GM10248 (cell line): ENCODE measurements at regions of chr6 and their contacts with region 1.

Region 1: GRCh38 chr6:43667245-43668150 is 20.1 kb downstream of the MRPS18A start:
- DNase-seq: peak; percentile 86
- CTCF ChIP-seq: peak; percentile 100

Region 2: GRCh38 chr6:43635387-43636307 is 31.9 kb before region 1 on chr6 and contains the start of gene MAD2L1BP:
- CTCF ChIA-PET with region 1: interaction called, 32 read pairs
- POLR2A ChIA-PET with region 1: no interaction called
- DNase-seq: peak; percentile 83
- CTCF ChIP-seq: no peak

Region 3: GRCh38 chr6:43657221-43657802 is 10.2 kb before region 1 on chr6:
- CTCF ChIA-PET with region 1: interaction called, 54 read pairs
- POLR2A ChIA-PET with region 1: no interaction called
- DNase-seq: no peak
- CTCF ChIP-seq: no peak

Region 4: GRCh38 chr6:43687437-43688347 is 20.2 kb after region 1 on chr6 and contains the start of gene MRPS18A:
- CTCF ChIA-PET with region 1: interaction called, 152 read pairs
- POLR2A ChIA-PET with region 1: no interaction called
- DNase-seq: peak; percentile 90
- CTCF ChIP-seq: no peak

Region 5: DNA sequence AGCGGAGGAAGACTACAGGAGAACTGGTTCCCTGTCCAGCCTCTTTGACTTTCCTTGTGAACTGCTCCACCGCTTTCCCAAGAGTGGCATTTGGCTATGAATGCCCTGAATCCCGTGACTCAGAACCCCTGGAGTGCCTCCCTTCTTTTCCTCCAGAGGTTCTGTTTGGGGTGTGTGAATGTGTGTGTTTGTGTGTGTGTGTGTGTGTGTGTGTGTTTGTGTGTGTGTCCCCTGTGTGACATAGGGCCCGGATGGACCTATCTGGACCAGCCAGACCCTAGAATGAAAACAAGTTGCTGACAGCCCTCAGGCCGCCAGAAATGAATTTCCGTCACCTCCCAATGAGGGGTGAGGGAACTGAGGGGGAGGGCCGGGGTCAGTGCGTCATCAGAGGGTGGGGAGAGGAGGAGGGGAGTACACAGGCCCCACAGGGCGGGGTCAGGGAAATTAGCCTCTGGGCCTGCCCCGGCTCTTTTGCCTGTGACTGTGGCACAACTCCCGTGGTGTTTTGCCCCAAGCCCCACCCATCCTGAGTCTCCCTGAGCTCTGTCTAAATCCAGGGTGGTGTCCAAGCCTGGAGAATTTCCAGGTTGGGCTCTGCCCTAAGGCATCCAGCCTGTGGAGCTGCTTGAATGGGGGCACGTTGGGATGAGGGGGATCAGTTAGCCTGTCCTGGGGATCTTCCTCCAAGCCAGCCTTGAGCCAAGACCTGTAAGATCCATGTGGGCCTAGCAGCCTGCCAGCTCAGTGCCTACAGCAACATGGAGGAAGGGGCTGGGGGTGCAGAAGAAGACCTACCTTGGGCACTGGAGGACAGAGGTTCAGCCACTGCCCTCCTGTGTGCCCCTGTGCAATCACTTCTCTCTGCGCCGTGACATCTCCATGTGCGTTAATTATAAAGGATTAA is 35.3 kb after region 1 on chr6:
- CTCF ChIA-PET with region 1: interaction called, 21 read pairs
- POLR2A ChIA-PET with region 1: no interaction called
- DNase-seq: peak; percentile 58
- CTCF ChIP-seq: no peak

Region 6: DNA sequence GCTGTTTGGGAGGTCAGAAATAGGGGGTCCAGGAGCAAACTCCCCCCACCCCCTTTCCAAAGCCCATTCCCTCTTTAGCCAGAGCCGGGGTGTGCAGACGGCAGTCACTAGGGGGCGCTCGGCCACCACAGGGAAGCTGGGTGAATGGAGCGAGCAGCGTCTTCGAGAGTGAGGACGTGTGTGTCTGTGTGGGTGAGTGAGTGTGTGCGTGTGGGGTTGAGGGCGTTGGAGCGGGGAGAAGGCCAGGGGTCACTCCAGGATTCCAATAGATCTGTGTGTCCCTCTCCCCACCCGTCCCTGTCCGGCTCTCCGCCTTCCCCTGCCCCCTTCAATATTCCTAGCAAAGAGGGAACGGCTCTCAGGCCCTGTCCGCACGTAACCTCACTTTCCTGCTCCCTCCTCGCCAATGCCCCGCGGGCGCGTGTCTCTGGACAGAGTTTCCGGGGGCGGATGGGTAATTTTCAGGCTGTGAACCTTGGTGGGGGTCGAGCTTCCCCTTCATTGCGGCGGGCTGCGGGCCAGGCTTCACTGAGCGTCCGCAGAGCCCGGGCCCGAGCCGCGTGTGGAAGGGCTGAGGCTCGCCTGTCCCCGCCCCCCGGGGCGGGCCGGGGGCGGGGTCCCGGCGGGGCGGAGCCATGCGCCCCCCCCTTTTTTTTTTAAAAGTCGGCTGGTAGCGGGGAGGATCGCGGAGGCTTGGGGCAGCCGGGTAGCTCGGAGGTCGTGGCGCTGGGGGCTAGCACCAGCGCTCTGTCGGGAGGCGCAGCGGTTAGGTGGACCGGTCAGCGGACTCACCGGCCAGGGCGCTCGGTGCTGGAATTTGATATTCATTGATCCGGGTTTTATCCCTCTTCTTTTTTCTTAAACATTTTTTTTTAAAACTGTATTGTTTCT is 102.3 kb after region 1 on chr6 and contains the start of gene VEGFA:
- CTCF ChIA-PET with region 1: interaction called, 83 read pairs
- POLR2A ChIA-PET with region 1: no interaction called
- DNase-seq: peak; percentile 97
- CTCF ChIP-seq: peak; percentile 99

Region 7: DNA sequence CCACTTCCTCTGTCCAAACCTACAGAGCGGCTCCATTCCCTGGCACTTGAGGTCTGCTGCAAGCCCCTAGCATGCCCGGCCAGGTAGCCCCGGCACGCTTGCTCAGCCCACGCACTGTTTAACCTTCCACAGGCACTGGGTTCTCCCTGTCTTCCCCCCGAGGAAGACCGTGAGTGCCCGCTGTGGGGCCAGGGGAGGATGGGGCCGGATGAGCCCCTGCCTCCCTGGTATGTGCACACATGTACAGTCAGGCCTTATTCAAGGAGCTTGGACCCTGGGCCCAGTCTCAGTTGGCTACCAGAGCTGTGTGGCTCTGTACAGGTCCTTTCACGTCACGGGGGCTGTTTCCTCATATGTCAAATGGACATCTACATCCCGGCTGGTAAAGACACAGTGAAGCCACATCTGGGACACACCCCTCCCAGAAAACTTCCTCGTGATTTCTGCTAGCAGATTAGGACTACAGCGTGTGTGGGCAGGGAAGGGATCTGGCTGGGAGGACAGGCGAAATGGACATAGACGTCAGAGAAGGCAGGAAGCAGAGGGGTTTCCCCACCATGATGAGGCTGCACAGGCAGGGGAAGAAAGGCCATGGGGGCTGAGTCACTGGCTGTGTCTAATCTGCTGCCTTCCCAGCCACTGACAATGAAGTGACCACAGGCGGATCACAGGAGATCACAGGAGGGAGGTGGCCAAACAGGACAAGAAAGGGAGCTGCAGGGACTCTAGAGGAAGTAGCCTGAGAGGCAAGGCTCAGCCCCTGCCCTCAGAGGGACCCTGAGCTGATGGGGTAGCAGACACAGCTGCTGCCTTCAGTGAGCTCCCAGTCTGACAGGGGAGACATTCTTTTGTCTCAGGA is 396.8 kb after region 1 on chr6:
- CTCF ChIA-PET with region 1: interaction called, 12 read pairs
- POLR2A ChIA-PET with region 1: no interaction called
- DNase-seq: peak; percentile 62
- CTCF ChIP-seq: no peak